PC-3 (cell line): ENCODE measurements at regions of chr14 and their contacts with region 1.

Region 1: DNA sequence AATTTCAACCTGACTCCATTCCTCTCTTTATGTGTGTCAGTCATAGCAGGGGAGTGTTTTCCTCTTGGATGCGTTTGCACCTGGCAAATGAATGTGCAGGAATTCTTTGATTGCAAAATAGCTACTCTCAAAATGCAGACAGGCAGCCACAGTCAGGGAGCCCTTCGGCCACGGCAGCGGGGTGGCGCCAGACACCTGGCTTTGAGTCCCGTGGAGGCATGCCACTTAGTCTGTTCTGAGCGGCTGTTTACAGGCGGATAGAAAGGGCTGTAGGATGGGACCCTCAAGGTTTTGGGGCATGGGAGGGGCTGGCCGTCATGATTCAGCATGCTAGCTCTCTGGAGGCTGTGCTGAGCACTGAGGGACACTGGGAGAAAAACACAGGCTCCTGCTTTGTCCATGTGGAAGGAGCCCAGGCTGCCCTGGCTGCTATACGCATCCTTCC is 117.1 kb downstream of the SLC25A47 start:
- DNase-seq: peak; percentile 87
- ATAC-seq: peak; percentile 69
- H3K4me3 ChIP-seq: peak overlapping the region; percentile 21; the same call in 1 of the 2 replicates
- H3K27ac ChIP-seq: peak overlapping the region; percentile 79
- H3K4me1 ChIP-seq: peaks cover 48% of the 10 kb centered on the region
- H3K27me3 ChIP-seq: no peaks in the 10 kb centered on the region
- CTCF ChIP-seq: peak; percentile 96

Region 2: DNA sequence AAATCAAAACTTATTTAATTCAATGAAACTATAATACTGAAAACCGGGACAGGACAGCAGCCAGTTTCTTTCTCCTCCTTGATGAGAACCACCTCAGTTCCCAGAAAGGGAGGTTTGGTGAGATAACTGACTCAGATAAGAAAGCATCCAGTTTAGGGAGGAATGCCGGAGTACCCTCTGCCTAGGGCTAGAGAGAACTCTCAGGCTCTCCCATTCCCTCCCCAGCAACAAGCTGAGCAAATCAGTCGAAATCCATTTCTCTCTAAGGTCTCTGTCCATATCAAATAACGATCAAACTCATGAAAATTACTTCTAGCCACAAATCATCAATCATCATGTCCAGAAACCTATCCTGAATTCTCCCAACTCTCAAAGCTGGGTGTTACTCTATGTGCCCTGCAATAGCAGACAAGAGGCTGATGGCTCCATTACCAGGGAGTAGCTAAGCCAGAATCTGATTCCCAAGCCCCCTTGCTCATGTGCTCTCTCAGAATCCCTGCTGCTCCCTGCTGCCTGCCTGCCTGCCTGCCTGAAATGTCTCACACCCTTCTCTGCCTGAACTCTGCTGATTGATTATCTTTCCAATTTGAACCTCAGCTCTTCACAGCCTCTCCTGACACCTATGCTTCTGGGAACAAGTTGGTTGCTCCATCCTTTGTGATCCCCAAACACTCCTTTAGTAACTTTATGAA is 67.7 kb before region 1 on chr14:
- CTCF ChIA-PET with region 1: no interaction called
- POLR2A ChIA-PET with region 1: no interaction called
- intact Hi-C with region 1: no loop called
- DNase-seq: no peak
- ATAC-seq: no peak
- H3K4me3 ChIP-seq: no peak overlapping the region
- H3K27ac ChIP-seq: no peak overlapping the region
- H3K4me1 ChIP-seq: peaks cover 18% of the 10 kb centered on the region
- H3K27me3 ChIP-seq: no peaks in the 10 kb centered on the region
- CTCF ChIP-seq: no peak

Region 3: DNA sequence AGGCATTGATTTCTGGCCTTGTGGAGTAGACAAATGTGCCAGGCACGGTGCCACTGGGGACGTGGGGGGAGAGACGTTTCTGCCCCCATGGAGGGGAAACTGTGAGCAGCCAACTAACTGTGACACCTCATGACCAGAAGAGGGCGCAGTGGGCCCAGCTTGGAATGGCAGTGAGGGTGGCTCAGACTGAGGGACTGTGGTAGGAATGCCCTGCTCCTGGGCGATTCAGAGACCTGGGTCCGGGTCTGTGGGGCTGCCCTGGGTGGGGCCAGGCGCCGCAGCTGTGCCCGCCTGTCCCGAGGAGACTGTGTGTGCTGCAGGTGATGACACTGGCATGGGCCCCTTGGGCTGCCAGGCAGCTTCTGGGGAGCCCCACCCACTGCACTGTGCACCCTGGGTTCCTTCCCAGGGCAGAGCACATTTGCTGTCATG is 56.5 kb before region 1 on chr14:
- CTCF ChIA-PET with region 1: interaction called, 42 read pairs
- POLR2A ChIA-PET with region 1: no interaction called
- intact Hi-C with region 1: loop called (anchors 1 kb)
- DNase-seq: peak; percentile 76
- ATAC-seq: peak; percentile 61
- H3K4me3 ChIP-seq: no peak overlapping the region
- H3K27ac ChIP-seq: no peak overlapping the region; the same call in 1 of the 2 replicates
- H3K4me1 ChIP-seq: peaks cover 33% of the 10 kb centered on the region
- H3K27me3 ChIP-seq: no peaks in the 10 kb centered on the region
- CTCF ChIP-seq: peak; percentile 90

Region 4: DNA sequence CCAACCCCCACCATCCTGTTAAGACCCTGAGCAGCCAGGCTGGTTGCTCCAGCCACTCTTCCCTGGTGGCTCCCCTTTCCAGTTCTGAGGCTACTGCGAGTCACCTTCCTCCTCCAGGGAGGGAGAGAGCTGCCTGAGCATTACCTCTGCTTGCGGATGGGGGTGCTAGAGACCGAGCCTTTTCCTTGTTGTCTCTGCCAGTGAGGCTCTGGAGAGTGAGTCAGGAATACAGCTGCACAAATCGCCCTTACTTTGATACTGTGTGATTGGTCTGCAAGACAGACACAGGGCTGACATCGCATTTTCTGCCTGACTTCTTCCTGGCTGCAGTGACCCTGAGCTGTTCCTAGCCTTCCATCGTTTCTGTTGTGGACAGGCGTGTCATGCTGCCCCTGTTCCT is 22.7 kb before region 1 on chr14:
- CTCF ChIA-PET with region 1: interaction called, 15 read pairs
- POLR2A ChIA-PET with region 1: interaction called, 3 read pairs
- intact Hi-C with region 1: loop called (anchors 1 kb)
- DNase-seq: peak; percentile 94
- ATAC-seq: peak; percentile 91
- H3K4me3 ChIP-seq: no peak overlapping the region
- H3K27ac ChIP-seq: peak overlapping the region; percentile 91
- H3K4me1 ChIP-seq: peaks cover 30% of the 10 kb centered on the region
- H3K27me3 ChIP-seq: no peaks in the 10 kb centered on the region
- CTCF ChIP-seq: peak; percentile 88

Region 5: GRCh38 chr14:100476012-100476822 is 36.0 kb after region 1 on chr14:
- CTCF ChIA-PET with region 1: interaction called, 24 read pairs
- POLR2A ChIA-PET with region 1: interaction called, 4 read pairs
- intact Hi-C with region 1: loop called (anchors 1 kb)
- DNase-seq: peak; percentile 97
- ATAC-seq: peak; percentile 95
- H3K4me3 ChIP-seq: peak overlapping the region; percentile 49
- H3K27ac ChIP-seq: peak overlapping the region; percentile 99
- H3K4me1 ChIP-seq: peaks cover 37% of the 10 kb centered on the region
- H3K27me3 ChIP-seq: no peaks in the 10 kb centered on the region
- CTCF ChIP-seq: no peak

Region 6: DNA sequence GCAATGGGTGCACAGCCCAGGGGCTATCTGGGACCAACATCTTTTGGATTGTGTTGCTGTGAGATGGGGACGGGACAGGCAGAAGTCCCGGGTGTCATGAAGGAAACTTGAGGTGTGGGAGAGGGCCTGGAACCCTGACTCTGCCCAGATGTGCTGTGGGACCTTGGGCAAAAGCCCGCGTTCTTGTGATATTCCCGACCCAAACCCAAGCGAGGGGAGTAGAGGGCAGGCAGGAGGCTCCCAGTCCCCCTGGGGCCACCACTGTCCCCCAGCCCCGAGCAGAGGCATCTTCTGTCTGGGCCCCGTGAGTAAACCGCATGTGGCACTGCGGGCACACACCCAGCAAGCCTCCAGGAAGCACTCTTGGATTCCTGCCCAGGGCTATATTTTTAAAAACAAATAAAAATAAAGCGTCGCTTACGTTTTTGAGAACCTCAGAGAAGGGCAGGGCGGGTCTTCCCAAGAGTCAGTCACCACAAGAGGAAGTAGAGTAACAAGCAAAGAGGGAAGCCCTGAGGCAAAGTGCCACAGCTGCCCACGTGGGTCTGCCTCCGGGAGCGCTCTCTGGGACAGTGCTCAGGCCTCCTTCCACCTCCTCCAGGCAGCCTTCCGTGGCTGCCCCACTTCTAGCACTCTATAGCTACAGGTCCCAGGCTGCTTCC is 107.6 kb after region 1 on chr14:
- CTCF ChIA-PET with region 1: interaction called, 3 read pairs
- POLR2A ChIA-PET with region 1: no interaction called
- intact Hi-C with region 1: loop called (anchors 1 kb)
- DNase-seq: peak; percentile 97
- ATAC-seq: peak; percentile 88
- H3K4me3 ChIP-seq: no peak overlapping the region
- H3K27ac ChIP-seq: peak overlapping the region; percentile 53
- H3K4me1 ChIP-seq: peaks cover 25% of the 10 kb centered on the region
- H3K27me3 ChIP-seq: no peaks in the 10 kb centered on the region
- CTCF ChIP-seq: no peak

Region 7: GRCh38 chr14:100645192-100645990 is 205.2 kb after region 1 on chr14:
- CTCF ChIA-PET with region 1: interaction called, 34 read pairs
- POLR2A ChIA-PET with region 1: no interaction called
- intact Hi-C with region 1: loop called (anchors 1 kb)
- DNase-seq: peak; percentile 90
- ATAC-seq: peak; percentile 88
- H3K4me3 ChIP-seq: no peak overlapping the region
- H3K27ac ChIP-seq: no peak overlapping the region
- H3K4me1 ChIP-seq: peaks cover 16% of the 10 kb centered on the region
- H3K27me3 ChIP-seq: no peaks in the 10 kb centered on the region
- CTCF ChIP-seq: peak; percentile 87